Left cardiac atrium (tissue), 4 donors: ENCODE measurements at regions of chr1 and their contacts with region 1.

Region 1: DNA sequence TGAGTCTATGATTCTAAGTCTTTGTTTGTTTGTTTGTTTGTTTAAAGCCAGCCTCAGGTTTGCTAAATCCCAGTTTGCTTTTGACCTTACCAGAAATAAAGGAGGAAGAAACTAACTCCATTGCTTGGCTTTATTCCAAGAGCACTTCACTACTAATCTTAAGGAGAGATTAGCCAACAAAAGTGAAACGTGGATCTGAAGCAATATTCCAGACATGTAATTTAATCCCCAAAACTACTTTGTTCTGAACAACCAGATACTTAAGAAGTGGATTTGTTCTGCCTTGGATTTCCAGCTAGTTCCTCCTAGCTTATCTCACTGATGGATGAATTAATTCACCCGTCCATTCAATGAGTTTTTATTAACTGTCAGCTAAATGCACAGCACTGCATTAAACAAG is 15.9 kb upstream of the CEP350 start:
- DNase-seq: no peak
- ATAC-seq: no peak

Region 2: GRCh38 chr1:179731628-179732027 is 207.1 kb before region 1 on chr1:
- intact Hi-C with region 1: no loop called
- DNase-seq: no peak
- ATAC-seq: no peak

Region 3: GRCh38 chr1:179831852-179832699 is 106.7 kb before region 1 on chr1:
- intact Hi-C with region 1: no loop called
- DNase-seq: no peak
- ATAC-seq: no peak

Region 4: GRCh38 chr1:180003026-180003695 is 64.4 kb after region 1 on chr1:
- intact Hi-C with region 1: loop called in 1 of 2 experiments (anchors 10 kb)
- DNase-seq: no peak
- ATAC-seq: no peak